Mammary epithelial cell (primary cell): ENCODE measurements at regions of chr14 and their contacts with region 1.

Region 1: GRCh38 chr14:89915114-89915878 is 39.2 kb downstream of the EFCAB11 start:
- DNase-seq: peak; percentile 55
- H3K4me3 ChIP-seq: no peak overlapping the region
- H3K27ac ChIP-seq: no peak overlapping the region
- H3K4me1 ChIP-seq: peaks cover 6% of the 10 kb centered on the region
- H3K27me3 ChIP-seq: no peaks in the 10 kb centered on the region
- CTCF ChIP-seq: peak; percentile 89 to 92

Region 2: GRCh38 chr14:89027097-89027740 is 888.1 kb before region 1 on chr14:
- CTCF ChIA-PET with region 1: no interaction called
- dilution Hi-C with region 1: no loop called
- in situ Hi-C with region 1: loop called (anchors 10 to 25 kb)
- intact Hi-C with region 1: loop called (anchors 1 kb)
- DNase-seq: peak; percentile 36
- H3K4me3 ChIP-seq: peak overlapping the region; percentile 51 to 62 (median 52)
- H3K27ac ChIP-seq: no peak overlapping the region
- H3K4me1 ChIP-seq: peaks cover 6% of the 10 kb centered on the region
- H3K27me3 ChIP-seq: peaks cover 6% of the 10 kb centered on the region
- CTCF ChIP-seq: peak; percentile 36 to 72

Region 3: DNA sequence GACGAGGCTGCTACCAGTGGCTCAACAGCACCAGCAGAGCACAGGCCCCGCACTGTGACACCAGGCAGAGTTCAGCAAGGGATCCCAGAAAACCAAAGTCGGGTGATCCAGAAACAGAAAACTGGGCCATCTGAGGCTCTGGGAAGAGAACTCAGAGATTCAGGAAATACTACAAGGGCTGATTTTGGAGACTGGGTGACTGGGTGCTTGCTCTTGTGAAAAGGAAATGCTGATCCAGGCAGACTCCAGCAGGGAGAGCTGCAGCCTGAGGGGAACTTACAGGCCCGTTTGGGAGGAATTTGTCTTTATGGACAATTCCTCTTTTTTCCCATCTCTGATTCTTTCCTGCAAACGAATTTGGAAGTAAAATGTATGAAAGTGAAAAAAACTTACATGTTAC is 526.4 kb before region 1 on chr14:
- CTCF ChIA-PET with region 1: no interaction called
- dilution Hi-C with region 1: no loop called
- in situ Hi-C with region 1: no loop called
- intact Hi-C with region 1: loop called (anchors 1 kb)
- DNase-seq: no peak
- H3K4me3 ChIP-seq: no peak overlapping the region
- H3K27ac ChIP-seq: no peak overlapping the region
- H3K4me1 ChIP-seq: no peaks in the 10 kb centered on the region
- H3K27me3 ChIP-seq: no peaks in the 10 kb centered on the region
- CTCF ChIP-seq: peak in 1 of 2 donors; percentile 34

Region 4: GRCh38 chr14:89589400-89590118 is 325.7 kb before region 1 on chr14:
- CTCF ChIA-PET with region 1: no interaction called
- dilution Hi-C with region 1: no loop called
- in situ Hi-C with region 1: no loop called
- intact Hi-C with region 1: no loop called
- DNase-seq: no peak
- H3K4me3 ChIP-seq: no peak overlapping the region
- H3K27ac ChIP-seq: no peak overlapping the region
- H3K4me1 ChIP-seq: no peaks in the 10 kb centered on the region
- H3K27me3 ChIP-seq: no peaks in the 10 kb centered on the region
- CTCF ChIP-seq: no peak

Region 5: DNA sequence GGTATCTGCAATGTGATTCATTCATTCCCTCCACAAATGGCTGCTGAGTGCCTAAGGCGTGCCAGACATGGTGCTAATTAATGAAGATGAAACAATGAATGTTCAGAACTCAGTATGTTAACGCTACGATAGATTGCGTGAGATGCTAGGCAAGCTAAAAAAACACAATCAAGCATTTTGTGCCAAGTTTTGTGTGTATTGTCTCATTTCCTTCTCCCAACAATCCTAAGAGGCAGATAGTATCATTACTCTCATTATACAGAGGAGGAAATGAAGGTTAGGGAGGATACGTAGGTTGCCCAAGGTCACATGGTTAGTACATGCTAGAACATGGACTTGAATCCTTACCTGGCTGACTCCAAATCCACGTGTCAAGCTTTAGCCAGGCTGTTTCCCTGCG is 225.2 kb before region 1 on chr14:
- CTCF ChIA-PET with region 1: no interaction called
- dilution Hi-C with region 1: no loop called
- in situ Hi-C with region 1: no loop called
- intact Hi-C with region 1: no loop called
- DNase-seq: no peak
- H3K4me3 ChIP-seq: no peak overlapping the region
- H3K27ac ChIP-seq: no peak overlapping the region
- H3K4me1 ChIP-seq: no peaks in the 10 kb centered on the region
- H3K27me3 ChIP-seq: no peaks in the 10 kb centered on the region
- CTCF ChIP-seq: no peak

Region 6: DNA sequence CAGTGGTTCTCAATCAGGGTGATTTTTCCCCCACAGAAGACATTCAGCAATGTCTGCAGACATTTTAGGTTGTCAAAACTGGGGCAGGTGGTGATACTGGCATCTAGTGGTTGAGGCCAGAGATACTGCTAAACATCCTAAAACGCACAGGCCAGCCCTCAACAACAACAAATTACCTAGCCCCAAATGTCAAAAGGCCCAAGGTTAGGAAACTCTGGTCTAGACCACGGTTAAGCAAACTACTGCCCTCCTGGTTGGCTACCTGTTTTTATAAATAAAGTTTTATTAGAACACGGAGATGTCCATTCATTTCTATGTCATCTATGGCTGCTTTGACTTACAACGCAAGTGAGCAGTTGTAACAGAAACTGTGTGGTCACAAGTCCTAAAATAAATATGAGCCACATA is 147.4 kb before region 1 on chr14:
- CTCF ChIA-PET with region 1: no interaction called
- dilution Hi-C with region 1: no loop called
- in situ Hi-C with region 1: no loop called
- intact Hi-C with region 1: loop called (anchors 2 kb)
- DNase-seq: peak; percentile 25
- H3K4me3 ChIP-seq: no peak overlapping the region
- H3K27ac ChIP-seq: no peak overlapping the region
- H3K4me1 ChIP-seq: no peaks in the 10 kb centered on the region
- H3K27me3 ChIP-seq: no peaks in the 10 kb centered on the region
- CTCF ChIP-seq: peak; percentile 37 to 74

Region 7: DNA sequence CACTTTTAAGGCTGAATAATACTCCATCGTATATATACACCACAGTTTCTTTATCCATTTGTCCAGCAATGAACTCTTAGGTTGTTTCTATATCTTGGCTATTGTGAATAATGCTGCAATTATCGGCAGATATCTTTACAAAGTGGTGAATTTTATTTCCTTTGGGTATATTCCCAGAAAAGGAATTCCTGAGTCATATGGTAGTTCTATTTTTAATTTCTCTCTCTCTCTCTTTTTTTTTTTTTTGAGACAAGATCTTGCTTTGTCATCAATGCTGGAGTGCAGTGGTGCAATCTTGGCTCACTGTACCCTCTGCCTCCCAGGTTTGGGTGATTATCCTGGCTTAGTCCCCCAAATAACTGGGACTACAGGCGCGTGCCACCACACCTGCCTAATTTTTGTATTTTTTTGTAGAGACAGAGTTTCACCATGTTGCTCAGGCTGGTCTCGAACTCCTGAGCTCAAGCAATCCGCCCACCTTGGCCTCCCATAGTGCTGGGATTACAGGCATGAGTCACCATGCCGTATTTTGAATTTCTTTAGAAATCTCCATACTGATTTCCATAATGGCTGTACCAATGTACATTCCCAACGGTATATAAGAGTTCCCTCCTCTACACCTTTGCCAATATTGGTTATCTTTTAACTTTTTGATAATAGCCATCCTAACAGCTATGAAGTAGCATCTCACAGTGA is 59.2 kb before region 1 on chr14:
- CTCF ChIA-PET with region 1: no interaction called
- dilution Hi-C with region 1: no loop called
- in situ Hi-C with region 1: no loop called
- intact Hi-C with region 1: loop called (anchors 5 kb)
- DNase-seq: peak; percentile 68
- H3K4me3 ChIP-seq: no peak overlapping the region
- H3K27ac ChIP-seq: no peak overlapping the region
- H3K4me1 ChIP-seq: peaks cover 10% of the 10 kb centered on the region
- H3K27me3 ChIP-seq: no peaks in the 10 kb centered on the region
- CTCF ChIP-seq: no peak